ENCODE measurements at regions of chr1 and their contacts with region 1.

Region 1: GRCh38 chr1:39258146-39258924 is 53.8 kb downstream of the MACF1 start:
- DNase-seq: peak; percentile 70
- ATAC-seq: peak; percentile 45
- H3K4me3 Mint-ChIP-seq: no peak overlapping the region
- H3K27ac Mint-ChIP-seq: peak overlapping the region; percentile 20
- H3K4me1 Mint-ChIP-seq: peaks cover 36% of the 10 kb centered on the region
- H3K27me3 Mint-ChIP-seq: no peaks in the 10 kb centered on the region

Region 2: GRCh38 chr1:39183503-39184353 is 74.6 kb before region 1 on chr1:
- CTCF ChIA-PET with region 1: interaction called, 245 read pairs
- DNase-seq: peak; percentile 85
- ATAC-seq: peak; percentile 84
- H3K4me3 Mint-ChIP-seq: no peak overlapping the region
- H3K27ac Mint-ChIP-seq: peak overlapping the region; percentile 71
- H3K4me1 Mint-ChIP-seq: peaks cover 46% of the 10 kb centered on the region
- H3K27me3 Mint-ChIP-seq: no peaks in the 10 kb centered on the region

Region 3: DNA sequence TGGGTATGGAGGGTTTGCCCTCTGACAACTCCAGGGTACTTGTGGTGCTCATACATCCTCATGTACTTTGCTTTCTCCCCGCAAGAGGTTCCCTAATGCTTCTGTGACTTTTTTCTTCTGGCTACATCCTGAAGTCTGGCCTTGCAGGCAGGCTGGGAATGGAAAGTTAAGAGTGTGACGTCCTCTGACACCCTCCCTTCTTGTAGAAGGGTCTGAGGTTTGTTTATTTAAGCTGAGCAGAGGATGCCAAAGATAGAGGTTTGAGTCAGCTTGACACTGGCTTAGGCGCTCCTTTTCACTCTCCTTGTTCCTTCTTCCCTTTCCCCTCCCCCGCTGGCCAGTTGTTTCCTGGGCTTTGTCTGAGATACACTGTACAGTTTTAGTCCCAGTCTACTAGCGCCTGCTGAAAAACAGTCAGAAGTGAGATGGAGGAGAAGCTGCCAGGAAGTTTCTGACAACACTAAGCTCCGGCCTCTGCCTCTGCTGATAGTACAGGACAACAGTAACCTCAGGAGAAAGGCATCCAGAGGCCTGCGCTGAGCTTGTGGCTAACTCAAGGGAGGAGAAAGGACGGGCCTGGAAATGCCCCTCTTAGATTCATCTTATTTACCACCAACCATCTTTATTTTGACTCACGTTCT is 53.8 kb before region 1 on chr1 and contains the start of gene MACF1:
- CTCF ChIA-PET with region 1: interaction called, 25 read pairs
- DNase-seq: peak; percentile 71
- ATAC-seq: peak; percentile 61
- H3K4me3 Mint-ChIP-seq: peak within 1 kb of the TSS; percentile 89
- H3K27ac Mint-ChIP-seq: peak within 1 kb of the TSS; percentile 100
- H3K4me1 Mint-ChIP-seq: peaks cover 47% of the 10 kb centered on the region
- H3K27me3 Mint-ChIP-seq: no peaks in the 10 kb centered on the region
- total RNA-seq, gene MACF1: 319 to 488 TPM

Region 4: GRCh38 chr1:39214998-39215873 is 43.1 kb before region 1 on chr1:
- CTCF ChIA-PET with region 1: interaction called, 36 read pairs
- DNase-seq: peak; percentile 67
- ATAC-seq: peak; percentile 79
- H3K4me3 Mint-ChIP-seq: peak overlapping the region; percentile 82
- H3K27ac Mint-ChIP-seq: peak overlapping the region; percentile 87
- H3K4me1 Mint-ChIP-seq: peaks cover 54% of the 10 kb centered on the region
- H3K27me3 Mint-ChIP-seq: no peaks in the 10 kb centered on the region

Region 5: DNA sequence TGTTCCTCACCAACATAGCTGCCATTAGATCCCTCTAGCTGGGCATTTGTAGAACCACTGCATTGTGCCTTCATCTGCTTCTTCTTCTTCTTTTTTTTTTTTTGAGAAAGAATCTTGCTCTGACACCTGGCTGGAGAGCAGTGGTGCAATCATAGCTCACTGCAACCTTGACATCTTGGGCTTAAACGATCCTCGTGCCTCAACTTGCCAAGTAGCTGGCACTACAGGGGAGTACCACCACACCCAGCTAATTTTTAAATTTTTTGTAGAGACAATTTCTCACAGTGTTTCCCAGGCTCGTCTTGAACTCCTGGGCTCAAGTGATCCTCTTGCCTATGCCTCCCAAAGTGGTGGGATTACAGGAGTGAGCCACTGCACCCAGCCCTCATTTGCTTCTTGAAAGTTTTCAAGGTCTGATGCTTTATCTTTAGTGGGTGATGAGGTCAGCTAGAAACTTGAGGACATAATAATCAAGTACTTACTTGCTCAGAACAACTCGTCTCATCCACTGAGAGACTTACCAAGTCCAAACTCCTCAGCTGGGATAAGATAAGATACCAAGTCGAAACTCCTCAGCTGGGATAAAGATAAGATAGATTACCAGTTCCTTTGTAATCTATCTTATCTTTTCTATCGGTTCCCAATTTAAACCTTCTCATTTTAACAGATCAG is 17.6 kb after region 1 on chr1:
- CTCF ChIA-PET with region 1: interaction called, 23 read pairs
- DNase-seq: no peak
- ATAC-seq: no peak
- H3K4me3 Mint-ChIP-seq: no peak overlapping the region
- H3K27ac Mint-ChIP-seq: no peak overlapping the region
- H3K4me1 Mint-ChIP-seq: peaks cover 37% of the 10 kb centered on the region
- H3K27me3 Mint-ChIP-seq: no peaks in the 10 kb centered on the region

Measured in activated CD8-positive, alpha-beta memory T cell treated with anti-CD3 and anti-CD28 coated beads, Interleukin-2, amount 10 ng/mL, durations not matched to agents 7 days and 5 days (primary cell).